Vagina (tissue), 2 donors: ENCODE measurements at regions of chr18 and their contacts with region 1.

Region 1: GRCh38 chr18:35029770-35030169 is 11.4 kb upstream of the MAPRE2 start:
- DNase-seq: no peak
- H3K4me3 ChIP-seq: peak overlapping the region; percentile 21 to 25
- H3K27ac ChIP-seq: peak overlapping the region; percentile 57
- H3K4me1 ChIP-seq: peaks cover 30% of the 10 kb centered on the region
- H3K27me3 ChIP-seq: no peaks in the 10 kb centered on the region
- CTCF ChIP-seq: no peak
- POLR2A ChIP-seq: no peak

Region 2: DNA sequence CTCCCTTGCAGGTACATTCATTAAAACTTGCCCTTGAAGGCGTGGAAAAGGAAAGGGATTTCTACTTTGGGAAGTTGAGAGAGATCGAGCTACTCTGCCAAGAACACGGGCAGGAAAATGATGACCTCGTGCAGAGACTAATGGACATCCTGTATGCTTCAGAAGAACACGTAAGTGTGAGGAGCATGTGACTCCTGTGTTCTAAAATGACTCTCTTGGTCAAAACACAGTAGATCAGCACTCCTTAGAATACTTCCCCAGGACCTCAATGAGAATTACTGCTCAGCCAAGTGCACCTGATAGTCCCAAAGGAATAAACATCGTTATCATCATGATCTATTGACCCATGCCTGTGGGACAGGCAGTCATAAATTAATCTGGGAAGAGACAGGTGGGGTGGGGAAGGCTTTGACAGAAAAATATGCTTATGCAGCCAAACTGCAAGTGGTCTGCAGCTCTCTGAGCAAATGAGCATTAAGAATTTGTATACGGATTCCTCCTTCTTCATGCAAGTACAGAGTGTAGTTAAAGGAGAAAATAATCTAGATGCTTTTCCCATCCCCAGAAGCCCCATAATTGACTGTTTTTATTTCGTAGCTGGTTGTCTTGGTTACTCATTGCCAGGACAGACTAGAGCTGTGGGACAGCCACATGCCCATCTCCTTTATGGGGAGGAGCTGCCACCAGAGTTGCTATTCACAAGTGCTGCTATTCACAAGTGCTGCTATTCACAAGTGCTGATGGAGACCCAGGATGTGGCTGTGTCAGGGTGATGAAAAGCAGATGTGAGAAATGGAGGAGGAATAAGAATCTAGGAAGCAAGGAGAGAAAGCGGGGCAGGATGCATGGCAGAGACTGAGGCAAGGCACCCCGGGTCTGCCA is 102.5 kb after region 1 on chr18:
- intact Hi-C with region 1: loop called (anchors 10 kb)
- DNase-seq: no peak
- H3K4me3 ChIP-seq: no peak overlapping the region
- H3K27ac ChIP-seq: no peak overlapping the region
- H3K4me1 ChIP-seq: no peaks in the 10 kb centered on the region
- H3K27me3 ChIP-seq: no peaks in the 10 kb centered on the region
- CTCF ChIP-seq: no peak
- POLR2A ChIP-seq: no peak